Spleen (tissue), 13 donors: ENCODE measurements at regions of chr5 and their contacts with region 1.

Region 1: GRCh38 chr5:17189381-17190036 is 27.9 kb upstream of the BASP1 start:
- DNase-seq: peak; percentile 87
- H3K4me3 ChIP-seq: no peak overlapping the region
- H3K27ac ChIP-seq: peak overlapping the region in 6 of 8 donors; percentile 2 to 49 (median 23)
- H3K4me1 ChIP-seq: peaks cover 10 to 23% (median 16%) of the 10 kb centered on the region in 6 donors
- H3K27me3 ChIP-seq: no peaks in the 10 kb centered on the region
- CTCF ChIP-seq: peak; percentile 52 to 84 (median 72)
- POLR2A ChIP-seq: no peak

Region 2: DNA sequence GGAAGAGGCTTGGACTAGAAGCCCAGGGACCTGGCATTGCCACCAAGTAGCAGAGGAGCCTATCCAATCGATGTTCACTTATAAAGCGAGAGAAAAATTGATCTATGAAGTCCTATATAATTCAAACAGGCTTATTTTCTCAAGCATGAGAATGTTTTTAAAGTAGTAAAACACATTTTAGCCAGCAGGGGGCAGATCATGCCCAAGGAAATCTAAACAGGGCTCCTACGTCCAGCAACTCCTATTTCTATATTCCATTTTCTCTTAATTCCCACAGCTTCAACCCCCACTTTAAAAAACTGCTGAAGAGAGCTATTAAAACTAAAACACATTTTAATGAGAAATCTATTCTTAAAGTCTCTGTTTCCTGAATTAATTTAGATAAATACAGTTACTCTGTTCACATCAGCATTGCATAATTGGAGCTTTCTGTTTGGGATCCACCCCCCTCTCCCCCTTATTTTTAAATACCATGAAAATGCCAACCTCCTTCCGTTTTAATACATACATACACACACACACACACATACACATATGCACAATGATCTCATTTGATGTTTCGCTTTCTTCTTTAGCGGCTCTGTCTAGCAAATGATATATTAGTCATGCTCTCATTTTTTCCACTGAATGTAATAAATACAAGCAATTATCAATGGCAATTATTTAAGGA is 398.3 kb before region 1 on chr5:
- intact Hi-C with region 1: loop called (anchors 5 kb)
- DNase-seq: no peak
- H3K4me3 ChIP-seq: no peak overlapping the region
- H3K27ac ChIP-seq: no peak overlapping the region
- H3K4me1 ChIP-seq: peaks cover 0 to 10% (median 5%) of the 10 kb centered on the region in 6 donors
- H3K27me3 ChIP-seq: no peaks in the 10 kb centered on the region
- CTCF ChIP-seq: peak in 10 of 11 experiments; percentile 5 to 71 (median 62)
- POLR2A ChIP-seq: no peak